ENCODE measurements at regions of chr19 and their contacts with region 1.

Region 1: DNA sequence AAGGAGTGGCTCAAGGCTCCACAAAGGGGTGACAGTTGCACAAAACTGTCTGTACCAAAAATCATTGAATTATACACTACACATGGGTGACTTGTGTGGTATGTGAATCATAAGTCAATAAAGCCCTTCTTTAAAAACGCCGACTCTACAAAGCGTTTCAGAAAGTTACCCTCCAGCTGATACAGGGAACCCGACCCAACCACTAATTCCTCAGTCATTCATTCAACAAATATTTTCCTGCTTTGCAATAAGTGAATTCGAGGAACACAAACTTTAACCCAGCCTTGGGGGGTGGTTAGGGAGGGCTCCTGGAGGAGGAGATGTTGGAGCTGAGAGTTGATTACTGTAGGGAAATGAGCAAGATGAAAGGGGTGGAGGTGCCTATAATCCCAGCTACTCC is 32.0 kb downstream of the LTBP4 start:
- DNase-seq: no peak

Region 2: GRCh38 chr19:40305403-40305802 is 327.8 kb before region 1 on chr19:
- intact Hi-C with region 1: loop called (anchors 10 kb)
- DNase-seq: no peak

Region 3: GRCh38 chr19:40420766-40421764 is 212.1 kb before region 1 on chr19:
- intact Hi-C with region 1: no loop called
- DNase-seq: peak; percentile 96

Region 4: DNA sequence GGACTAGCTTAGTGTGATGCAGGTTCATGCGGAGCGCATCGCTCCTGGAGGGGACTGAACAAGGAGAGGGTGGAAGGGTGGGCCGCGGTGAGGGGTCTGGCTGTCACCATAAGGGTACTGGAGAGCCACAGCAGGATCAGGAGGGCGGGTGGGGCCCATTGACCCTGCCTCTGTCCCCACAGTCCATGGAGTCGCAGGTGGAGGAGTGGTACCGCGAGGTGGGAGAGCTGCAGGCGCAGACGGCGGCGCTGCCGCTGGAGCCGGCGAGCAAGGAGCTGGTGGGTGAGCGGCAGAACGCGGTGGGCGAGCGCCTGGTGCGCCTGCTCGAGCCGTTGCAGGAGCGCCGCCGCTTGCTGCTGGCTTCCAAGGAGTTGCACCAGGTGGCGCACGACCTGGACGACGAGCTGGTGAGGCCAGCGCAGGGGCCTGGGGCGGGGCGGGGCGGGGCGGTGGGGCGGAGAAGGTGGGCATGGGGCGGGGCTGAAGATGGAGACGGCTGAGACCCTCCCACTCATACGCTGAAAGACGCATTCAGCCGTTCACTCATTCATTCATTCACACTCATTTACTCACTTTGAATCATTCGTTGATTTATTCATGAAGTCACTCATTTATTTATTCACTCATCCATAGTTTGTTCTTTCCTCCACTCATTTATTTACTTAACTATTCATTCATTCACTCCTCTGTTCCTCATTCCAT is 84.0 kb before region 1 on chr19:
- intact Hi-C with region 1: loop called (anchors 1 kb)
- DNase-seq: no peak